ENCODE measurements at regions of chr4 and their contacts with region 1.

Region 1: DNA sequence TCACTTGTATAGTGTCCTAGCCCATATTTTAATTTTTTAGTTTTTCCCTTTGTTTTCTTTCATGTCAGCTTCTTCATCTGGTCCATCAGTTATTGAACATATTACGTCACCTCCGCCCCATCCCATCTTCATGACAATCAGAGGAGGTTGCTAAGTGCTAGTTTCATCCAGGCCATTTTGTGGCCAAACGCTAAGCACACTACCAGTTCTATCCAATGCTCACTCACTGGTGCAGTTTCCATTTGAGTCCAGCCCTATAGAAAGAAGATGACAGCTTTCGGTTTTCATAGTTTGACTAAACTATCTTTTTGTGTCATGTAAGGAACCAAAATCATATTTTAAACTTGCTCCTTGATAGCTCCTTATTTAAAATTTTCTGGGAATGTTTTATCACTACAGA is 304.2 kb downstream of the TENM3 start:
- DNase-seq: no peak
- H3K4me3 ChIP-seq: no peak overlapping the region
- H3K27me3 ChIP-seq: no peaks in the 10 kb centered on the region
- CTCF ChIP-seq: no peak

Region 2: GRCh38 chr4:181507938-181508337 is 1039.5 kb before region 1 on chr4:
- CTCF ChIA-PET with region 1: no interaction called
- POLR2A ChIA-PET with region 1: interaction called, 13 read pairs
- DNase-seq: no peak
- H3K4me3 ChIP-seq: no peak overlapping the region
- H3K27me3 ChIP-seq: no peaks in the 10 kb centered on the region
- CTCF ChIP-seq: no peak

Region 3: GRCh38 chr4:182560358-182560757 is 12.9 kb after region 1 on chr4:
- CTCF ChIA-PET with region 1: no interaction called
- POLR2A ChIA-PET with region 1: no interaction called
- DNase-seq: no peak
- H3K4me3 ChIP-seq: no peak overlapping the region
- H3K27me3 ChIP-seq: no peaks in the 10 kb centered on the region
- CTCF ChIP-seq: no peak